ENCODE measurements at regions of chr4 and their contacts with region 1.

Region 1: DNA sequence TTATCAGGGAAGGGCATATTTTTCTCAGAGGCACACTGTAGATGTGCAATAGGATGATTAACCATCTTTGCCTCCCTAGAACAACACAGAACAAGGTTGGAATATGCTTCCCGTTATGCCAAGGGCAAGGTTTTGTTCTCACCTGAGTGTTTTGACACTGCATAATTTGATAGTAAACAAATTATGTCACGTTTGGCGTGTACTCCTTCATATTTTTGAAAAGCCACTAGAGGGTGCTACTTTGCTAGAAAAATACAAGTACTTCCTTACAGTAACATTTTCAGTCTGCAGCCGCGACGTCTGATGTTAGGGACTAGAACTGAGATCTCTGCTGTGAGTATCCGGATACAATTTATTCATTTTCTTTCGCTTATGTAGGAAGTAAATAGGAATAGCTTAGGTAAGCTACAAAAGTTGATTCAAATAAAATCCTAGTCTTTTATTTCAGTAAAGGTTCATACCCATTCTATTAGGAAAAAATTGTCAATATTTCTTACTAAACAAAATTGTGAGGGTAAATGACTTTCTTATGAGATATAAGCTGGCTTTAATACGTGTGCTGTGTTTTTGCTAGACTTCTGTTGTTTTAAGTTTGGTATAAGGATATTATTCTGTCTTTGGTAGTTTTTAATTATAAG is 181.1 kb upstream of the WDFY3 start:
- DNase-seq: peak; percentile 59
- ATAC-seq: peak; percentile 90

Region 2: GRCh38 chr4:84814094-84814750 is 333.3 kb before region 1 on chr4:
- intact Hi-C with region 1: no loop called
- DNase-seq: no peak
- ATAC-seq: no peak

Region 3: GRCh38 chr4:85370430-85371032 is 223.0 kb after region 1 on chr4:
- intact Hi-C with region 1: loop called (anchors 5 kb)
- DNase-seq: no peak
- ATAC-seq: peak; percentile 73

Region 4: DNA sequence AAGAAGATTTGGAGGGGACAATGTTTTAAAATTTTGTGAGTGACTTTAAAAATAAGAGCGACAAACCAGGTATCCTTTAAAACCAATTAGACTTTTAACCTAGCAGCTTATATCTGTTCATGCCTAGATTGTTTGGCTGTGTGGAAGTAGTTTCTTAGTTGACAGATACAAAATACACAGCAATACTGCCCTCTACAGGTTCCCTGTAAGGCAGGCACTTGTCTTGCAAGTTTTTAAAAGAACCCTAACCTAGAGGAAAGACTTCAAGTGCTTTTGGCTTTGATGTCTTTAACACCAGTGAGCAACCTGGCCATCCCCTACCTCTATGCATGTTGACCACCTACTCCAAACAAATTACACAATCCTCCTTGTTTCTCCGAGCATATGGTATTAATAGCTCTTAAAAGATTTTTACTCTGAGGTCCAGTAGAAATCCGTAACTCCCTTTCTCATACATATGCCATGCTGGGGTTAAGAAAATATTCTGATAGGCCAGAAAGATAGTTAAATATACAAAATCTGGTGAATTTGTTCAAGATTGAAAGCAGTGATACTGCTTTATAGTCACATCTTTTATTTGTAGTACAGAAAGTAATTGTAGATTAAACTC is 600.4 kb after region 1 on chr4:
- intact Hi-C with region 1: loop called (anchors 5 kb)
- DNase-seq: no peak
- ATAC-seq: peak; percentile 89

Region 5: DNA sequence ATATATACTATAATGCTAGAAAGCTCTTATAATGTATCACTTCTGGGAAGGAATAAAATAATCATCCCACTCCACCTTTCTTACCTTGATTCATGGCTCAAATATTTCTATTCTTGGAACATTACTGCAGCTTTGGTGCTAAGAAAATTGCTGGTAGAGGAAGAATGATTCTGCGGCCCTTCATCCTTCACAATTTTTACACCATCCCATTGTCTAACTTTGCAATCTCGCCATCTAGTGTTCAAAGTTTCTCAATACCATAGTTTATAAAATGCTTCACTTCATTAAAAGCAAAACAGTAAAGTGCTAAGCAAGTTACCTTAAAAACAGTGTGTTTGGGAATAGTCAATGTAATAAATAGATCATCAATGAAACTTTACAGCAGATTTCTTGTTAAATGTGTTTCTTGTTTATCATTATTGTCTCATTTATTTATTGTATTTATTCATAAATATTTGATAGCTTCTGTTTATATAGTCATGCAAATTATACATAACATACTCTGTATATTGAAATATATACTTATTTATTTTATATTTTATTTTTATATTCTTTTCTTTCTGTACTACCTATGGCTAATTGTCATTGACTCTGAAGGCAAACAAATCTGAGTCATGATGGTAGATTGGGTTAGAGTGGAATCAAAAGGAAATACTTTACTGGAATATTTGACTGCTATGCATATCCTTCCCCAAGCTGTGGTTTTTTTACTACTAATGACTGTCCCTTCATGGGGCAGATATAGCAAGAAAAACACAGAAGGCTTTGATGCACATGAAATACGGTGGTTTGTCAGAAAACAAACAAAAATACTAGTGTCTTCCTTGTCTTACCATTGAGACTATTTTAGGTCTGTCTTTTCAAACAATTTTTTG is 821.6 kb after region 1 on chr4:
- intact Hi-C with region 1: loop called (anchors 5 kb)
- DNase-seq: no peak
- ATAC-seq: peak; percentile 68